HEK293 (cell line): ENCODE measurements at regions of chr10 and their contacts with region 1.

Region 1: GRCh38 chr10:26881600-26882331 is 21.0 kb upstream of the ABI1 start:
- H3K4me3 ChIP-seq: no peak overlapping the region
- H3K27ac ChIP-seq: no peak overlapping the region
- H3K4me1 ChIP-seq: 0 out of 2 replicates have a peak, but pooled peaks cover 2% of the 10 kb centered on the region
- CTCF ChIP-seq: 0 out of 2 replicates have a peak, but pooled peaks have one; percentile 41

Region 2: DNA sequence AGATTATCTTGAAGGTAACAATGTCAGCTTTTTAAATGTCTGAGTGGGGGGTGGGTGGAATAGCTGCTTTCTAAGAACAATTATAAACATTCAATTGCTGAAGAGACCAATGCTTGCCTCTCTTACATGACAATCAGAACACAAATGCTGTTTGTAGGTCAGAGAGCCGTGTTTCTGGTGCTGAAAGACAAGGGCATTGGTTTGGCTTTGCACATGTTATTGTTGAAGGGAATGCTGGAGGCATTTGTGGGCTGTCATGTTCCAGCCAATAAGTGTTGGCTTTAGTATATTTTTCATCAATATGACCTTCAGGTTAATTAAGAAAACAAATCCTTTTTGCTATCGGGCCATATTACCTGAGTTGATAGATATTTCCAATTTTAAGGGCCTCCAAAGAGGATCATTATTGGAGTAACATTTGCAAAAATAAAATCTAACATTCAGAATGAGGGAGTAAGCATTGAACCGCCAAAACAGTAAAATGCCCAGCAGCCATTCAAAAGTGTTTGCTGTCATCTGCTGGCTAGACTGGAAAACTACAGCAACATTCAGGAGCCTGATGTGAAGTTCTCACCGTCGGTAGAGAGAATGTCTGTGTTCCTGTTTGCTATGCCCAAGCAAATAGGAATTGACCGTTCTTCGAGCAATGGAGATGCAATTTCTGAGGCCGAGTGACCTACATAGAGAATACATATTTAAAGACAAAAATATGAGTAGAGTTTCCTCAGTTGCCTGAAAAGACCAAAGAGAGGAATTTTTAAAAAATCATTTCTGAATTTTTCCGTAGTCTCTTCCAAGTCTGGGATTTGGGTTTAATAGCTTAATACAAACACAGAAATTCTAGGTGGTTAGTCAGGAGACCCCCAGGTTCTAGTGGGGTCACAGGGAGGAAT is 324.8 kb before region 1 on chr10:
- CTCF ChIA-PET with region 1: interaction called, 12 read pairs
- POLR2A ChIA-PET with region 1: no interaction called
- H3K4me3 ChIP-seq: no peak overlapping the region
- H3K27ac ChIP-seq: no peak overlapping the region
- H3K4me1 ChIP-seq: no peaks in the 10 kb centered on the region
- CTCF ChIP-seq: peak; percentile 81

Region 3: GRCh38 chr10:26725837-26726727 is 155.7 kb before region 1 on chr10:
- CTCF ChIA-PET with region 1: interaction called, 99 read pairs
- POLR2A ChIA-PET with region 1: interaction called, 3 read pairs
- H3K4me3 ChIP-seq: no peak overlapping the region
- H3K27ac ChIP-seq: no peak overlapping the region
- H3K4me1 ChIP-seq: no peaks in the 10 kb centered on the region
- CTCF ChIP-seq: no peak

Region 4: GRCh38 chr10:26860443-26861204 is 21.1 kb before region 1 on chr10 and contains the start of gene ABI1:
- CTCF ChIA-PET with region 1: interaction called, 21 read pairs
- POLR2A ChIA-PET with region 1: no interaction called
- H3K4me3 ChIP-seq: peak within 1 kb of the TSS; percentile 92
- H3K27ac ChIP-seq: peak within 1 kb of the TSS; percentile 92
- H3K4me1 ChIP-seq: peaks cover 10% of the 10 kb centered on the region
- CTCF ChIP-seq: peak; percentile 35

Region 5: GRCh38 chr10:26869528-26869927 is 12.2 kb before region 1 on chr10:
- CTCF ChIA-PET with region 1: interaction called, 17 read pairs
- POLR2A ChIA-PET with region 1: no interaction called
- H3K4me3 ChIP-seq: no peak overlapping the region
- H3K27ac ChIP-seq: no peak overlapping the region
- H3K4me1 ChIP-seq: no peaks in the 10 kb centered on the region
- CTCF ChIP-seq: no peak

Region 6: GRCh38 chr10:27143686-27144085 is 261.9 kb after region 1 on chr10:
- CTCF ChIA-PET with region 1: no interaction called
- POLR2A ChIA-PET with region 1: no interaction called
- H3K4me3 ChIP-seq: no peak overlapping the region
- H3K27ac ChIP-seq: no peak overlapping the region
- H3K4me1 ChIP-seq: no peaks in the 10 kb centered on the region
- CTCF ChIP-seq: no peak